MCF 10A (cell line): ENCODE measurements at regions of chr5 and their contacts with region 1.

Region 1: GRCh38 chr5:33997331-33997983 is 10.4 kb downstream of the AMACR start:
- DNase-seq: peak; percentile 79
- H3K4me3 Mint-ChIP-seq: no peak overlapping the region
- H3K27ac Mint-ChIP-seq: peak overlapping the region; percentile 24
- H3K4me1 Mint-ChIP-seq: no peaks in the 10 kb centered on the region
- H3K27me3 Mint-ChIP-seq: no peaks in the 10 kb centered on the region
- CTCF ChIP-seq: peak; percentile 57

Region 2: DNA sequence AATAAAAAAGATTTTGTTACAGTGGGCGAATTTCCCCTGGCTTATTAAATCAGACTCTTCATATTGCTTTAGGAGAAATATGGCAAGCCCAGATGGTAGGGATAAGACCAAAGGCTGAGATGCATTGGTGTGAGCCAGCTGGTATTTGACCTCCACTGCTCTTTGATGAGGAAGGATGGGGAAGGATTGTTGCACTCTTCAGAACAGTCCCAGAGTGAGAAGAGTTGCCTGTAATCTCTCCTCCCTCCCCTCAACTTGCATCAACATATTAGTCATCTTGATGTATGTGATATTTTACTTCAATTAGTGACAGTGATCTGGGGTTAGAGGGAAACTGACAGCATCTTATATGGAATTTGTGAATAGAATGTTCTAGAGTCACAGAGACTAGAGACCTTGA is 242.2 kb before region 1 on chr5:
- CTCF ChIA-PET with region 1: no interaction called
- POLR2A ChIA-PET with region 1: no interaction called
- intact Hi-C with region 1: no loop called
- DNase-seq: no peak
- H3K4me3 Mint-ChIP-seq: no peak overlapping the region
- H3K27ac Mint-ChIP-seq: no peak overlapping the region
- H3K4me1 Mint-ChIP-seq: no peaks in the 10 kb centered on the region
- H3K27me3 Mint-ChIP-seq: no peaks in the 10 kb centered on the region
- CTCF ChIP-seq: no peak

Region 3: DNA sequence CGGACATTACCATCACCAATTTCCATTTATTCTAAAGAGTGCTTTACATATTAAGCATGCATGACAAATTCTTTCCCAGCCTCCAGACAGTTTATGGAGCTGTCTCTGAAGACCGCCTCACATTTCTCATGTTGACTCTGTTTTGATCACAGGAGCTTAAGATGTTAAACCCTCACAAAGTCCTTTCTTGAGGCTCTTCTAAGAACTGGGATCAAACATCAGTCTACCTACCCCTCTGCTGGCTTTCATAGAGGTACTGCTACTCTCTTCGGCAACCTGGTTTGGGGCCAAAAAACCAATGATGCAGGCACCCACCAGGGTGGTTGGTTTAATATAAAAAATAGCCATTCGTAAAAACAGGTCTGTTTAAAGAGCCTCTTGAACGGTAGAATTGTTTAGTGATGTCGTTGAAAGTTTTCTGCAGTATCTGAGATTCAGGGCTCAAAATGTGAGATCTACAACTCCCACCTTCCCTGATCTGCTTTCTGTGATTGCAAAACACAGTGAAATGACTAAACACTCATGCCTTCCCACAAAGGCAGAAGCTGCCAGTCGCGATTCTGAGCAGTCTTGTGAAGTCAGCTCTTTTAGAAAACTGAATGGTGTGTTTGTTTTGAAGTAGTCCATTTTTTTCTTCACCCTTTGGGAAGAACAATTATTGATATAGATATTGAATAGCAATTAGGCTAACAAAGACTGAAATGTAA is 57.7 kb before region 1 on chr5:
- CTCF ChIA-PET with region 1: no interaction called
- POLR2A ChIA-PET with region 1: no interaction called
- intact Hi-C with region 1: no loop called
- DNase-seq: peak; percentile 36
- H3K4me3 Mint-ChIP-seq: no peak overlapping the region
- H3K27ac Mint-ChIP-seq: no peak overlapping the region
- H3K4me1 Mint-ChIP-seq: peaks cover under 1% of the 10 kb centered on the region
- H3K27me3 Mint-ChIP-seq: peaks cover 55% of the 10 kb centered on the region
- CTCF ChIP-seq: no peak

Region 4: GRCh38 chr5:34007621-34008600 is 10.5 kb after region 1 on chr5 and contains the start of gene AMACR:
- CTCF ChIA-PET with region 1: interaction called, 24 read pairs
- POLR2A ChIA-PET with region 1: interaction called, 10 read pairs
- intact Hi-C with region 1: no loop called
- DNase-seq: peak; percentile 89
- H3K4me3 Mint-ChIP-seq: peak within 1 kb of the TSS; percentile 75
- H3K27ac Mint-ChIP-seq: peak within 1 kb of the TSS; percentile 57
- H3K4me1 Mint-ChIP-seq: peaks cover 13% of the 10 kb centered on the region
- H3K27me3 Mint-ChIP-seq: no peaks in the 10 kb centered on the region
- CTCF ChIP-seq: no peak
- total RNA-seq, gene AMACR: 6.6 and 7.9 TPM in 2 replicates

Region 5: GRCh38 chr5:34464830-34465229 is 467.4 kb after region 1 on chr5:
- CTCF ChIA-PET with region 1: interaction called, 27 read pairs
- POLR2A ChIA-PET with region 1: no interaction called
- intact Hi-C with region 1: loop called (anchors 1 kb)
- DNase-seq: no peak
- H3K4me3 Mint-ChIP-seq: no peak overlapping the region
- H3K27ac Mint-ChIP-seq: no peak overlapping the region
- H3K4me1 Mint-ChIP-seq: peaks cover 11% of the 10 kb centered on the region
- H3K27me3 Mint-ChIP-seq: peaks cover 17% of the 10 kb centered on the region
- CTCF ChIP-seq: no peak